Mucosa of descending colon (tissue), 3 donors: ENCODE measurements at regions of chr4 and their contacts with region 1.

Region 1: DNA sequence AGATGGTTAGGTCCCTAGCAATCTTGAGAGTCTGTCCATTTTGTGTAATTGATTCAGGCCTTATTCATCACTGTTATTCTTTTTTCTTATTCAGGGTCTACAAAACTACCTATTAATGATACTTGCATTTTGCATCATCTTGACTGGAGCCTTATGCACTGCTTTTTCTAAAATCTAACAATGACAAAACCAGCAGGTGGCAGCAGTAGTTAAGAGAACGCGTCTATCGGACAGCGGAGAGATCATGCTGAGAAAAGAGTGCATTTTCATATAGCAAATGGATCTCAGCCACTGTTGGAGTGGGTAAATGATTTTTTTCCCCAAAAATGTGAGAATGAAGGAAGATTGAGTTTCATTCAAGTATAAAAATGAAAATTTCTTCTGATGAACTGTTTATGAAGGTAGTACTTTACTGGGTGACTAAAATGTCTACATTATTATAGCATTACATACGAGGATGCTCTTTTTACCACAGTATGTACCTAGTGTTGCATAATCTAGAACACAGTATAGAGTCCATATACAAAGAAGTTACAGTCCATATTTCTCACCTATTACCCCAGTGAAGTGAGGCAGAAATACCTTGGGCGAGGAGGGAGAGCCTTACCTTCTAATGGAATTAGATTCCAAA is 43.2 kb downstream of the TMEM144 start:
- DNase-seq: peak in 1 of 3 donors; percentile 80
- ATAC-seq: peak; percentile 67
- H3K4me3 ChIP-seq: no peak overlapping the region
- H3K4me1 ChIP-seq: no peaks in the 10 kb centered on the region
- CTCF ChIP-seq: no peak

Region 2: GRCh38 chr4:158056689-158057245 is 196.7 kb before region 1 on chr4:
- intact Hi-C with region 1: no loop called
- DNase-seq: no peak
- ATAC-seq: no peak
- H3K4me3 ChIP-seq: no peak overlapping the region
- H3K4me1 ChIP-seq: no peaks in the 10 kb centered on the region
- CTCF ChIP-seq: no peak

Region 3: DNA sequence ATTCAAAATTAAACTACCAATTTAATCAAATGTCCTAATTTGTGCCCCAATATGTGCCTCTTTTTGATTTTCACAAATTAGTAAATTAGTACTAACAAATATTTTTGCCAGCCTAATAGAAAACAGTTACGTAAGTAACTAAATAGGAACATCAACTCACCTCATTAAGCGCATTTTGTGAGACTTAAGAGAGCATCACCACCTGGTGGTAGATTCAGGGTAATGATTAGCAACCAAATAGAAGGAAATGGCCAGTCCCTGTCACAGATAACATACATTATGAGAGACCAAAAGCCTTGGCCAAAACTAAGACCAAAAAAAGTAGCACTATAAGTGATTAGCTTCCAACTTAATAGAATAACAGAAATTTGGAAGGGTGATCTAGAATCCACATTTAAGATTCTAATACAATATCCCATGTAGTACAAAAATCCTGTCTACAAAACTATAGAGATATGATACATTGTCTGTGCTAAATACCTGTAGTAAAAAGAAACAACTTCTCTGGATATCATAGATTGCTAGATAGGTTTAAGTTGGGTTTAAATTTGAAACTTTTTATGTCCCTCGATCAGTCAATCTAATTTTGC is 371.5 kb after region 1 on chr4:
- intact Hi-C with region 1: loop called in 1 of 2 experiments (anchors 10 kb)
- DNase-seq: peak in 1 of 3 donors; percentile 40
- ATAC-seq: peak; percentile 65
- H3K4me3 ChIP-seq: no peak overlapping the region
- H3K4me1 ChIP-seq: no peaks in the 10 kb centered on the region
- CTCF ChIP-seq: peak; percentile 34